Activated T-helper 2 cell treated with anti-CD3 and anti-CD28 coated beads, Interferon-gamma antibody, Interleukin-2, Interleukin-4, amounts not matched to agents 10 μg/mL and 5 μg/mL and 100 μg/mL, durations not matched to agents 14 hours and 24 hours and 36 hours (primary cell): ENCODE measurements at regions of chr4 and their contacts with region 1.

Region 1: DNA sequence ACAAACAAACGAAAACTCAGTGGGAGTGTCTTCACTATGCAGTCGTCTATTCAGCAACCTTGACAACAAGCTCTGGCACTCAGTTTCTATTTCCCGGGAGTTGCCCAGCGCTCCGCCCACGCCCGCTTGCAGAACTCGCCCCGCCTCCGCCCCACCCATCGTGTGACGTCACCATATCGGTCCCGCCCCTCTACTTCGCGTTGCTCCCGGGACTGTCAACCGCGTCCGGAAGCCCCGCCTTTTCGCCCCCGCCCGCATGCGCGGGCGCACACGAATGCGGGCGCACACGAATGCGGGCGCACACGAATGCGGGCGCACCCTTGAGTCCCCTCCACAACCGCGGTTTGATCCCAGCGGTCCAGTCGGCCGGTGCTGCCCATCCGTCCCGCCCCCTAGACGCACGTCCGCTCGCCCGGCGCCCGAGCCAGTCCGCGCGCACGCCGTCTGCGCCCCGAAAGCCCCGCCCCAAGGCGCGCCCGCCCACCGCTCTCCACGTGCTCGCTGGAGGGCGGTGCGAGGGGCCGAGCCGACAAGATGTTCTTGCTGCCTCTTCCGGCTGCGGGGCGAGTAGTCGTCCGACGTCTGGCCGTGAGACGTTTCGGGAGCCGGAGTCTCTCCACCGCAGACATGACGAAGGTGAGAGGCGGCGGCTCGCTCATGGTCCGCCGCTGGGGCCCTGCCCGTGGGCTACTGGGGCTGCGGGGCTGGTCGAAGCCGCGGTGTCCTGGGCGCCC is at the start of gene LAP3:
- DNase-seq: peak; percentile 98
- H3K4me3 Mint-ChIP-seq: peak within 1 kb of the TSS; percentile 93
- H3K27ac Mint-ChIP-seq: peak within 1 kb of the TSS; percentile 87
- H3K4me1 Mint-ChIP-seq: peaks cover 26% of the 10 kb centered on the region
- H3K27me3 Mint-ChIP-seq: no peaks in the 10 kb centered on the region
- total RNA-seq, gene LAP3: 90.8 and 94.9 TPM in 2 replicates

Region 2: GRCh38 chr4:17336524-17336961 is 240.6 kb before region 1 on chr4:
- intact Hi-C with region 1: loop called (anchors 2 kb)
- DNase-seq: peak; percentile 80
- H3K4me3 Mint-ChIP-seq: no peak overlapping the region
- H3K27ac Mint-ChIP-seq: peak overlapping the region; percentile 79
- H3K4me1 Mint-ChIP-seq: peaks cover 38% of the 10 kb centered on the region
- H3K27me3 Mint-ChIP-seq: peaks cover 2% of the 10 kb centered on the region

Region 3: DNA sequence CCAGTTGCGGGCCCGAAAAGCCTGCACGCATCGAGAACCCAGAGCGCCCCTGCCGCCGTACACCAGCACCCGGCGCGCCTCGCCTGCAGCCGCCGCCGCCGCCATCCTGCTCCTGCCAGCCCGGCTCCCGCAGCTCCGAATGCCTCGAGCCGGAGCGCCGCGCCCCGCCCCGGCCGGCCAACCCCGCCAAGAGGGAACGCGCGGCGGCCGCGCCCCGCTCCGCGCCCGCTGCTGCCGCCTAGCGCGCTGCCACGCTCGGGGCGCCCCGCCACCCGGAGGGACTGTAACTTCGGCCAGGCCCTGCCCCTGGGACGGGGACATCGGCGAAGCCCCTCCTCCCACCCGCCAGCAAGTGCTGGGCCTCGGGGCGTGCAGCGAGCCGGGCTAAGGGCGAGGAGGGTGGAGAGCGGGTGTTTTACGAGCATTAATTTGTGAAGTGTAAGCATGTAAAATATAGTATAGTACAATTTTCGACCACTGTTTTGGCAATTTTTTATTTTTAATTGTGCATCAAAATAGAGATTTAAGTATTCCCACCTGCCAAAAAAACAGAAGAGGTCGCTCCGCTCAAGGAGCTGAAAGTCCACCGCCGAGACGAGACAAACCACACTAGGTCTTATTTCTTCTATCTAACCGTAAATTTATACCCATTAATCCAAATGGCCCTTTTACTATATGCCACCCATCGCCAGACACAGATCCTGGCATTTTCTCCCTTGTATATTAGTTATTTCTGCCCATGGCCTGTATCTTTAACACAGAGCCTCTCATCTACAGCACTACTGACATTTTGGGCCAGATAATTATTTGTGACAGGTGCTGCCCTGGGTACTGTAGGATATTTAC is 64.9 kb before region 1 on chr4 and contains the start of gene QDPR:
- intact Hi-C with region 1: loop called (anchors 2 kb)
- DNase-seq: peak; percentile 70
- H3K4me3 Mint-ChIP-seq: peak within 1 kb of the TSS; percentile 99
- H3K27ac Mint-ChIP-seq: peak within 1 kb of the TSS; percentile 84
- H3K4me1 Mint-ChIP-seq: peaks cover 22% of the 10 kb centered on the region
- H3K27me3 Mint-ChIP-seq: peaks cover 14% of the 10 kb centered on the region
- total RNA-seq, gene QDPR: 28.2 and 34.3 TPM in 2 replicates

Region 4: DNA sequence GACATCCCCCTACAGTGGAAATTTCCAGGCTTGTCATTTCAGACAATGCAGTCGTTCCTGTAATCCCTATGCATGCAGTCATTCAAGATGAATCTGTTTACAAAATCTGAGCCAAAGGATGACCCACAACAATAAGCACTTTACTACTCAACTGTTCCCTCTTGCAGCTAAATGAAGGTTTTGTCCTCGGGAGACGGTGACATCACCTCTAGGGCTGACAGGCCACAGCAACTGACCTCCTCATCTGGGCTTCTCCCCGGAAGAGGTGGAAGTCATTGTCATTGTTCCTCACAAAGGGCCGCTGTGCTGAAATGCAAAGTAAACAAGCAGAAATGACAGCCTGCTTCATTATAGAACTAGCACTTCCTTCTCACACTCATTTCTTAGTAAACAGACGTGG is 32.9 kb before region 1 on chr4:
- intact Hi-C with region 1: loop called (anchors 1 kb)
- DNase-seq: no peak
- H3K4me3 Mint-ChIP-seq: no peak overlapping the region
- H3K27ac Mint-ChIP-seq: no peak overlapping the region
- H3K4me1 Mint-ChIP-seq: peaks cover 6% of the 10 kb centered on the region
- H3K27me3 Mint-ChIP-seq: peaks cover 16% of the 10 kb centered on the region

Region 5: DNA sequence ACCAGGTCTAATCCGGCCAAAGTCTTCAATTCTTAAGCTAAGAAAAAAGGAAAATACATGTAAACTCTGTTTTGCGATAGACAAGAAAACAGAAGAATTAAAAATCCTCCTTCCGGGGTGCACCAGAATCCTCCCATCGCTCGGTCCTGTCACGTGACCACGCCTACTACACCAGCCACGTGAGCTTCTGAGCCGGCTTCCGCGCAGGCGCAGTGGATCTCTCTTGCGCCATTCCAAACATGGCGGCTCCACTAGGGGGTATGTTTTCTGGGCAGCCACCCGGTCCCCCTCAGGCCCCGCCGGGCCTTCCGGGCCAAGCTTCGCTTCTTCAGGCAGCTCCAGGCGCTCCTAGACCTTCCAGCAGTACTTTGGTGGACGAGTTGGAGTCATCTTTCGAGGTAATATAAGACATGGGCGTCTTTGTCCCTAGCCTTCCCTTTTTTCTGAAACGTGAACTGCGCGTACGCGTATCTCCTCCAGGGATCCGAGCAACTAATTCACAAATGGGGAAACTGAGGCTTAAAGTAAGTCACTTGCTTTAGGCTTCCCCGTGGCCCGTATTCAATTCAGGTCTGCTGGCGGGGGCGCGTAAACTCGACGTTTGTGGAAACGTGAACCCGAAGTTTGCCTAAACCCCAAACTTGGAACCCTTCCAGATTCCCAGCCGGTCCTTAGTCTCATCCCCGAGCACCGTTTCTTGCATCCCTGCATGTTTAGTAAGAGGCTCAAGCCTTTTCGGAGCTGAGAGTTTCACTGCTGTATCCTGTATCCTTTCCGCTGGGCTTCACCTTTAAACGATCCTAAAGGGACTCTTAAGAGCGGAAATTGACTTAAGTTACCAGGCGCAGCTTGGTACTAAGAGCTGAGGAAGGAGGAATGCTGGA is 37.6 kb after region 1 on chr4 and contains the start of gene MED28:
- intact Hi-C with region 1: loop called (anchors 1 kb)
- DNase-seq: peak; percentile 92
- H3K4me3 Mint-ChIP-seq: peak within 1 kb of the TSS; percentile 90
- H3K27ac Mint-ChIP-seq: peak within 1 kb of the TSS; percentile 91
- H3K4me1 Mint-ChIP-seq: peaks cover 24% of the 10 kb centered on the region
- H3K27me3 Mint-ChIP-seq: no peaks in the 10 kb centered on the region
- total RNA-seq, gene MED28: 53.2 and 55.7 TPM in 2 replicates

Region 6: DNA sequence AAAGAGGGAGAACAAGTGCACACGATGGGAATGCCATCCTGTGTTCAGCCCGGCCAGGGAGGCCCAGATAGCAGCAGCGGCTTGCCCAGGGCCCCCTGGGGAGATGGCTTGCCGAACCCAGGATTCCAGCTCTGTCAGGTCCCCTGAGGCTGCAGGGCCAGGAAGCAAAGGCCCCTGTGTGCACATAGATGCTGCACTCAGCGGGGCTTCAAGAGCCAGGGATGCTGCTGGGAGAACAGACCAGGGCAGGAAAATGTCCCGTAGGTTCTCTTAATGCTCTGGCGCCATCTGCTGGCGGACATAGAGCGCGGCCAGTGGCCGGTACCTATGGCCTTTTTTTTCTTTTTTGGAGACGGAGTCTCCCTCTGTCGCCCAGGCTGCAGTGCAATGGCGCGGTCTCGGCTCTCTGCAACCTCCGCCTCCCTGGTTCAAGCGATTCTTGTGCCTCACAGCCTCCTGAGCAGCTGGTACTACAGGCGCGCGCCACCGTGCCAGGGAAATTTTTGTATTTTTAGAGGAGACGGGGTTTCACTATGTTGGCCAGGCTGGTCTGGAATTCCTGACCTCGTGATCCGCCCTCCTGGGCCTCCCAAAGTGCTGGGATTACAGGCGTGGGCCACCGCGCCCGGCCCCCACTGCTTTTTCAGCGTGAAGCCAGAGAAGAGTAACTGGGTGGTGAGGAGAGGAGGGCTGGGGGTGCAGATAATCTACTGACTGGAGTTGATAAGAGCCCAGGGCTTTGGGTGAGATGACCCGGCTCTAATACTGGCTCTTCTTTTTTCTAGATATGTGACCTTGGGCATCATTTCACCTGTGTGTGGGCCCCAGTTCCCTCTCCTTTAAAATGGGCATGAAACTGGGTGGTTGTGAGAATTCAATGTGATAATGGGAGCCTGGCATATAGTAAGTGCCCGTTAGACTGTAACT is 59.9 kb after region 1 on chr4:
- intact Hi-C with region 1: loop called (anchors 2 kb)
- DNase-seq: peak; percentile 55
- H3K4me3 Mint-ChIP-seq: no peak overlapping the region
- H3K27ac Mint-ChIP-seq: no peak overlapping the region
- H3K4me1 Mint-ChIP-seq: no peaks in the 10 kb centered on the region
- H3K27me3 Mint-ChIP-seq: no peaks in the 10 kb centered on the region

Region 7: DNA sequence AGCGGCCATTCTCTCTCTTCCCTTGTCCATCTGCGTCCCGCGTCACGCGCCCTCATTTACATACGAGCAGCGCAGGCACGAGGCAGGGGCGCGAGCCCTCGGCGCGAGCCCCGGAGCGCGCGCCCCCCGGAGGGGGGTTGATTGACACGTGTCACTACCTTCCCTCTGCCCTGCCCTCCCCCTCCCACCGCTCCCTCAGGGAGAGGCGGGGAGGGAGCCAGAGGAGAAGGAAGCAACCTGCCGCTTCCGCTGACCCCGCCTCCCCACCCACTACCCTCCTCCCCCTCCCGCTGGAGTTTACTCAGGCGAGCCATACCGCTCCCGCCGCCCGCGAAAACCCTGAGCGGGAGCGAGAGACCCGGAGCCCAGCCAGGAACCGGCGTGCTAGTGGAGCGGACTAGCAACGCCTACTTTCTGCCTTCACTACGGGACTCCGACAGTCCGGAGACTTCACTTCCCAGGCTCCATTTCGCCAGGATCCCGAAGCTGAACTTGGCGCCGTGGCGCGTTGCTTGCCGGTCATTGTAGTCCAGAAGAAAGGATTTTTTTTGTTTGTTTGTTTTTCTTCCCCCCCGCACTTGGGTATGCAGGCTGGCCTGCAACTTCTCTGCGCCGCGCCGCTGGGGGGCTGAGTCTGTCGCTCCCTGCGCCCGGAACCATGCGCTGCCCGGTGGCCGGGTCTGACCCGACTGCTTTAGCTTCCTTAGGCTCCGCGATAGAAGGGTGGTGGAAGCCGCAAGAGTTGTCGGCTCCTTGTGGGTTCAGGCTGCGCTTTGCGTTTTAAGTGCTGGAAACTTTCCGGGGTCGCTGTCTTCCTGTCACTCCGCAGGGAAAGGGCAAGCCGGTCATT is 444.8 kb after region 1 on chr4 and contains the start of gene LCORL:
- intact Hi-C with region 1: loop called (anchors 1 kb)
- DNase-seq: peak; percentile 83
- H3K4me3 Mint-ChIP-seq: peak within 1 kb of the TSS; percentile 92
- H3K27ac Mint-ChIP-seq: peak within 1 kb of the TSS; percentile 84
- H3K4me1 Mint-ChIP-seq: peaks cover 14% of the 10 kb centered on the region
- H3K27me3 Mint-ChIP-seq: peaks cover 57% of the 10 kb centered on the region
- total RNA-seq, gene LCORL: 9.5 and 12.8 TPM in 2 replicates